B cell (primary cell): ENCODE measurements at regions of chr11 and their contacts with region 1.

Region 1: GRCh38 chr11:18012863-18013781 is at the start of gene SERGEF:
- DNase-seq: peak; percentile 95
- ATAC-seq: peak; percentile 90
- H3K4me3 ChIP-seq: peak within 1 kb of the TSS; percentile 77 to 90 (median 83)
- H3K4me3 Mint-ChIP-seq: peak within 1 kb of the TSS; percentile 100
- H3K27ac ChIP-seq: peak within 1 kb of the TSS; percentile 61 to 65
- H3K27ac Mint-ChIP-seq: peak within 1 kb of the TSS; percentile 99
- H3K4me1 ChIP-seq: peaks cover 9 to 21% of the 10 kb centered on the region in 2 donors
- H3K4me1 Mint-ChIP-seq: peaks cover 27% of the 10 kb centered on the region
- H3K27me3 ChIP-seq: no peaks in the 10 kb centered on the region
- H3K27me3 Mint-ChIP-seq: no peaks in the 10 kb centered on the region
- CTCF ChIP-seq: no peak
- total RNA-seq, gene SERGEF: 52.5 and 54.3 TPM in 2 replicates

Region 2: DNA sequence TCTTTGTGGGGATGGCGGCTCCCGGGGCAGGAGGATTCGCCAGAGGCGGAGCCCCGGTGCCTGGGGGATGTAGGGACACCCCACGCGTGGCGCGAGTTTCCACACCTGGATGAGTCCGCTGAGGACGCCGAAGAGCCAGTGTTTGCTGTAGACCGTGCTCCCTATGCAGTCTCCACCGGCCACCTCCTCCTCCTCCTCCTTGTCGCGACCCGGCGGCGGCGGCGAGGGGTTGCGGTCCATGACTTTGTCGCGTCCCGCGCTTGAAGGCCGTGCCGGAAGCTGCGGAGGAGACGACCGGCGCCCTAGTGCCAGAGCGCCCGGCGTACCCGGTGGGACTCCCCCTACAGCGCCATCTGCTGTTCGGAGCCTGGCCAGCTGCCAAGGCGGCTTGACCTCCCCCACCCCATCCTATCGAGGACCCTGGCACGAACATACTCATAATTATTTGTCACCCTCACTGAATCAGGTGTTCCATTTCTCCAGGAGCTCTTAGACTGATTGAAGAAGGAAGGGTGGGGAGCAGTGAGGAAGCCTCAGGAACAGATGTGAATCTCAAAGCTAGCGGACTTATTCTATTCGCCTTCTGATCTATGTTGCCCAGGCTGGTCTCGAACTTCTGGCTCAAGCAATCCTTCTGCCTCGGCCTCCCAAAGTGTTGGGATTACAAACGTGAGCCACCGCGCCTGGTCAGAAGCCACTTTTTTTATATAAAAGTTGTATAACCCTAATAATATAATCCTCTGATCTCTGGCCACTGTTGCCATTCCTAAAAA is 92.9 kb after region 1 on chr11 and contains the start of gene SAAL1:
- CTCF ChIA-PET with region 1: interaction called, 9 read pairs
- POLR2A ChIA-PET with region 1: no interaction called
- intact Hi-C with region 1: loop called (anchors 1 kb)
- DNase-seq: peak; percentile 91
- ATAC-seq: peak; percentile 98
- H3K4me3 ChIP-seq: peak within 1 kb of the TSS; percentile 70 to 99 (median 82)
- H3K4me3 Mint-ChIP-seq: peak within 1 kb of the TSS; percentile 95
- H3K27ac ChIP-seq: peak within 1 kb of the TSS; percentile 65 to 91
- H3K27ac Mint-ChIP-seq: peak within 1 kb of the TSS; percentile 90
- H3K4me1 ChIP-seq: peaks cover 15 to 17% of the 10 kb centered on the region in 2 donors
- H3K4me1 Mint-ChIP-seq: peaks cover 28% of the 10 kb centered on the region
- H3K27me3 ChIP-seq: peaks cover 0 to 4% (median 1%) of the 10 kb centered on the region in 4 experiments
- H3K27me3 Mint-ChIP-seq: peaks cover 19% of the 10 kb centered on the region
- CTCF ChIP-seq: peak; percentile 89
- total RNA-seq, gene SAAL1: 35.2 and 37.8 TPM in 2 replicates

Region 3: GRCh38 chr11:19240420-19241259 is 1227.5 kb after region 1 on chr11 and contains the start of gene E2F8:
- CTCF ChIA-PET with region 1: no interaction called
- POLR2A ChIA-PET with region 1: no interaction called
- intact Hi-C with region 1: loop called (anchors 5 kb)
- DNase-seq: peak; percentile 87
- ATAC-seq: peak; percentile 95
- H3K4me3 ChIP-seq: peak within 1 kb of the TSS; percentile 49 to 91 (median 66)
- H3K4me3 Mint-ChIP-seq: peak within 1 kb of the TSS; percentile 96
- H3K27ac ChIP-seq: no peak within 1 kb of the TSS
- H3K27ac Mint-ChIP-seq: peak within 1 kb of the TSS; percentile 73
- H3K4me1 ChIP-seq: peaks cover 20 to 22% of the 10 kb centered on the region in 2 donors
- H3K4me1 Mint-ChIP-seq: peaks cover 20% of the 10 kb centered on the region
- H3K27me3 ChIP-seq: peaks cover 0 to 44% (median 27%) of the 10 kb centered on the region in 4 experiments
- H3K27me3 Mint-ChIP-seq: peaks cover 37% of the 10 kb centered on the region
- CTCF ChIP-seq: no peak
- total RNA-seq, gene E2F8: 0.22 TPM in 1 of 2 replicates, not detected in the other